WTC11 (cell line): ENCODE measurements at regions of chr11 and their contacts with region 1.

Region 1: DNA sequence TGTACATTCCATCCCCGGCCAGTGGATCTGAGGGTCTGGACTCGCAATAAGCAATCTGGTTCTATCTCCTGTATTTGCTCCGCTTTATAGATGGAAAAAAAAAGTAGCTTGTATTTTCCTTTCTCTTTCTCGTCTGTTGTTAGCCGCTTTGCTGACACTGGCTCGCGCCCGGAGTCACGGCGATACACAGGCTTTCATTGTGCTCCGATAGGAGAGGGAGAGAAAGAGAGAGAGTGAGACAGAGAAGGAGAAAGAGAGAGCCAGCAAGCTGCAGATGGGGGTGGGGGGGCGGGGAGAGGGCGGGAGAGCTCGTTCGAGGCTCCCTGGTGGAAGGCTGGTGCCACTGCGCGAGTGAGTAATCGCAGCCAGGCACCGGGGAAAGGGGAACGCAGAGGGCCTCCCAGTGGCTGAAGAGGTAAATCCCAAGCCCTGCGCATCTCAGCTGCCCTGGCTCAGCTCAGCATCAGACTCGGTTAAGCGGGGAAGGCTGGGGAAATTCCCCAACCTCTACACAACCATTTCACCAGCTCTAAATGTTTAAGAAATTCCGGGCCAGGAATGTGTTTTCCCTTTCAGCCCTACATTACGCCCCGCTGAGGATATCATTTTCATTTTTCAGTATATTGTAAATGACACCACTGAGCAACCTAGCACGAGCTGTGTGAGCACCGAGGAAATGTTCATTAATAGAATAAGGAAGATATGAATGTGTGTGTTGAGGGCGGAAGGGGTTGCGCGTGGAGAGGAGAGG is at the start of gene MAML2:
- DNase-seq: peak; percentile 94
- ATAC-seq: peak; percentile 97
- H3K4me3 Mint-ChIP-seq: peak within 1 kb of the TSS; percentile 94
- H3K27ac Mint-ChIP-seq: peak within 1 kb of the TSS; percentile 80; the same call in 1 of the 2 replicates
- H3K4me1 Mint-ChIP-seq: peaks cover 45% of the 10 kb centered on the region
- H3K27me3 Mint-ChIP-seq: no peaks in the 10 kb centered on the region
- CTCF ChIP-seq: peak; percentile 50; the same call in 1 of the 2 replicates
- total RNA-seq, gene MAML2: 5.1 to 8.1 TPM (median 5.2 TPM) in 3 replicates

Region 2: GRCh38 chr11:96045622-96046456 is 297.3 kb before region 1 on chr11:
- CTCF ChIA-PET with region 1: interaction called, 28 read pairs
- POLR2A ChIA-PET with region 1: no interaction called
- DNase-seq: peak; percentile 64
- ATAC-seq: peak; percentile 99
- H3K4me3 Mint-ChIP-seq: peak overlapping the region; percentile 31
- H3K27ac Mint-ChIP-seq: peak overlapping the region; percentile 89; the same call in 1 of the 2 replicates
- H3K4me1 Mint-ChIP-seq: peaks cover 25% of the 10 kb centered on the region
- H3K27me3 Mint-ChIP-seq: no peaks in the 10 kb centered on the region; the same call in 1 of the 2 replicates
- CTCF ChIP-seq: no peak

Region 3: GRCh38 chr11:96091476-96091875 is 251.7 kb before region 1 on chr11:
- CTCF ChIA-PET with region 1: interaction called, 15 read pairs
- POLR2A ChIA-PET with region 1: interaction called, 4 read pairs
- DNase-seq: no peak
- ATAC-seq: peak; percentile 78
- H3K4me3 Mint-ChIP-seq: no peak overlapping the region
- H3K27ac Mint-ChIP-seq: no peak overlapping the region
- H3K4me1 Mint-ChIP-seq: peaks cover 25% of the 10 kb centered on the region
- H3K27me3 Mint-ChIP-seq: no peaks in the 10 kb centered on the region
- CTCF ChIP-seq: no peak

Region 4: DNA sequence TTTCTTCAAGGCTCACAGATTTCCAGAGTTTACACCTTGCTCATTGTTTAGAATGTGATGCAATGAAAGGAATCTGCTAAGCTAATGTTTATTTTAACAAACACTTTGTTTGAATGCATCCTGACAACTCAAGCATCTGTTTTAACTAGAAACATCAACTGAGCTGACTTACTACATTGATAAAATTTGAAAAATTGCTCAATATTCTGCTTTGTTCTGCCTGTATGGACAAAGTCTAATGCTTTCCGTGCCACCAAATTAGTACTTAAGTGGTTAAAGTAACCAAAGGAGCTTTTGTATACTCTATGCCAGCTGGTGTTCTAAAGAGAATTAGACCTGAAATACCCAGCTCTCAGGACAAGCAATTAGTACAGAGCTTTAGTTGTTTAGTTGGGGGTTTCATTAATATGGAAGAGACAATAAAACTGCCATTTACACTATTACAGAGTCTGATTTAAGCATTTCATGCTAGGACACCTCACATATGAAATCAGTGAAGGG is 105.3 kb before region 1 on chr11:
- CTCF ChIA-PET with region 1: interaction called, 47 read pairs
- POLR2A ChIA-PET with region 1: no interaction called
- DNase-seq: no peak
- ATAC-seq: no peak
- H3K4me3 Mint-ChIP-seq: no peak overlapping the region
- H3K27ac Mint-ChIP-seq: no peak overlapping the region
- H3K4me1 Mint-ChIP-seq: peaks cover 29% of the 10 kb centered on the region
- H3K27me3 Mint-ChIP-seq: no peaks in the 10 kb centered on the region
- CTCF ChIP-seq: no peak

Region 5: DNA sequence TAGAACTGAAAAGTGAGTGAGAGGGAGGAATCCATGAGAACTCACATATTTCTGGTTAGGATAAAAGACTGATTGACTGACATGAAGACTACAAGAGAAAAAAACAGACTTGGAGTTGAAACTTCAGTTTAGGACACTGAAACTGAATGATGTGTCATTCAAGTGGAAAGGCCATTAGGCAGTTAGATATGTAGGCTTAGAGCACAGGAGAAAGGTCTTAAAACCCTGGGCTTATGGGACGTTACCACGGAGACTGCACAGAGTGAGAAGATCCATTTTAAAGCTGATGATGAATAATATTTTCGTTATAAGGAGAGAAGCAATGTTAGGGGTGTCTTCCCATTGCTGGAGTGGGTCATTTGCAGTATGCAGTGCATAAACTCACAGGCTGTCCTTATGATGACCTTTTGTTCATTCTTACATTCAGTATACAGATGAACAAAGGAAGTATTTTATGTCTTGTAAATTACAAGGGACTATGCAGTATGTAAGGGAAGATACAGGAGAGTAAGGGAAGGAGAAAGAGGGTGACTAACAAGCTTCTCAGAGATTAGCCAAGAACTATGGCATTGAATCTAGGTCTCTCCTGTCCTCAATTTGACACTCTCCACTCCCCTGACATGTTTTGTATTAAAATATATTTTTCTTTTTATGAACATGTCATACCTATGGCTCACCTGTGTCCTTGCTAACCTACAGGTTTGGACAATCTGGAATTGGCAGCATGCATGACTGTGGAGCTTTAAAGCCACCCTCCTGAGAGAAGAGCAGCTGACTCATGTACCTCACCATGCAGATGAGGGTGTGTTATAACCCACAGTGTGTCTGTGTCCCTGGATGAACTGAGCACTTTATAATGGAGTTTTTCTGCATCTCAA is 63.9 kb before region 1 on chr11:
- CTCF ChIA-PET with region 1: interaction called, 20 read pairs
- POLR2A ChIA-PET with region 1: interaction called, 3 read pairs
- DNase-seq: no peak
- ATAC-seq: no peak
- H3K4me3 Mint-ChIP-seq: no peak overlapping the region
- H3K27ac Mint-ChIP-seq: no peak overlapping the region
- H3K4me1 Mint-ChIP-seq: peaks cover 45% of the 10 kb centered on the region
- H3K27me3 Mint-ChIP-seq: no peaks in the 10 kb centered on the region
- CTCF ChIP-seq: no peak

Region 6: DNA sequence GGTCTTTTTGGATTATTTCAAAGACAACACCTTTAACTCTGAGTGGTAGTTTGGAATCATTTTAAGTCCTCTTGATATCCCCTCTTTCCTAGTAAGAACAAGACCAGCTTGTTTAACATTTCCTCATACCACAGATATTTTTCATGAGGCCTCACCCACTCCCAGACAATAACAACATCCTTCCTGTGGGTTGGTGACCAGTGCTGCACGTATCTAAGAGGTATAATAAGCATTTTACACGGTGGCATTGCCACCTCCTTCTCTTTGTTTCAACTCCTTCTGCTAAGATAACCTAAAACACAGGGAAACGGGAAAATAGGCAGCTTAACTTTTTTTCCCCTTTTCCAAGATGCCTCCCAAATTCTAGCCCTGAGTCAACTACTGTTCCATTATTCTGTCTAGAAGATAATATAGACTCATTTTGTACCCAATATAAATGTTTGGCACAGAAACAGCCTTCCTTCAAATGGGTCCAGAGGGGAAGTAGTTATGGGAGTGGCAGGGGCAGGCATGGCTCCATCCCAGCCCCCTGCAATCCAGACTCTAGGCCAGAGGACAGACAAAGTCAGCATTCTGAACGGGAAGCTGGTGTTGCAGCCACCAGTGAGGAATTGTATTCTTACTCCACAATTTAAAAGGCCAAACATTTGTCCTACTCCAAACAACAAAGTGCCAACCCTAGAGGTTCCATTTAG is 28.7 kb before region 1 on chr11:
- CTCF ChIA-PET with region 1: interaction called, 33 read pairs
- POLR2A ChIA-PET with region 1: no interaction called
- DNase-seq: no peak
- ATAC-seq: no peak
- H3K4me3 Mint-ChIP-seq: no peak overlapping the region
- H3K27ac Mint-ChIP-seq: peak overlapping the region; percentile 77; the same call in 1 of the 2 replicates
- H3K4me1 Mint-ChIP-seq: peaks cover 65% of the 10 kb centered on the region
- H3K27me3 Mint-ChIP-seq: no peaks in the 10 kb centered on the region
- CTCF ChIP-seq: no peak

Region 7: GRCh38 chr11:96472085-96472484 is 128.9 kb after region 1 on chr11:
- CTCF ChIA-PET with region 1: no interaction called
- POLR2A ChIA-PET with region 1: no interaction called
- DNase-seq: no peak
- ATAC-seq: peak; percentile 90
- H3K4me3 Mint-ChIP-seq: no peak overlapping the region
- H3K27ac Mint-ChIP-seq: no peak overlapping the region
- H3K4me1 Mint-ChIP-seq: no peaks in the 10 kb centered on the region
- H3K27me3 Mint-ChIP-seq: peaks cover 2% of the 10 kb centered on the region; the same call in 1 of the 2 replicates
- CTCF ChIP-seq: no peak